ENCODE measurements at regions of chr12 and their contacts with region 1.

Region 1: DNA sequence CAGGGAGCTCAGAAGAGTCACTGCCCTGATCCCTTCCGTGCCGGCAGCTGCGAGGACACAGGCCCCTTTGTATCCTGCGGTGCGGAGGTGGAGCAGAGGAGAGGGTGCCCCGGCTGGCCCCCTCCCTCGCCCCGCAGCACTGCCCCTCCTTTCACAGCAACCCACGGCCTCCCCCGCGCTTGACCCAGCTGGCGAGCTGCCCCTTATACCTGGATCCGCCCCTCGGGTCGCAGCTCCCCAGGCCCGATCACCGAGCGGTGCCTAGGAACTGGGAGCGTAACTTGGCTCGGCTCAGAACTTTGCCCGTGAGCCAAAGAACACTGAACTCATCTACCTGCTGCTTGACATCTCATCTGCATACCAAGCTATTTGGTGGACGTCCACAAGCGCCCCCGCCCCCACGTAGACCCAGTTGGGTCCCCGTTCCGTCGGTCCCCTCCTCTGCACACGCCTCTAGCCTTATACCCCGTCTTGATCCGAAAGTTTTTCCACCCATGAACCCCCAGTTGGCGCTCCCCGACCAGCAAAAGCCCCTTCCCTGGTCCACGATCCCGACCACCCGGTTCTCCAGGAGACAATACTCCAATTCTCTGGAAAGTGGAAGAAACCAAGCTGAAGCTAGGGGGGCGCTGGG is 697 bp upstream of the DNAJC14 start:
- DNase-seq: peak; percentile 56 to 74
- ATAC-seq: peak; percentile 28 to 44 (median 38)
- H3K4me3 ChIP-seq: peak overlapping the region; percentile 93
- H3K27ac ChIP-seq: peak overlapping the region; percentile 78
- H3K4me1 ChIP-seq: peaks cover 13% of the 10 kb centered on the region
- H3K27me3 ChIP-seq: no peaks in the 10 kb centered on the region
- CTCF ChIP-seq: no peak

Region 2: GRCh38 chr12:55642669-55643068 is 187.4 kb before region 1 on chr12:
- intact Hi-C with region 1: loop called in 1 of 2 experiments (anchors 10 kb)
- DNase-seq: no peak
- ATAC-seq: no peak
- H3K4me3 ChIP-seq: no peak overlapping the region
- H3K27ac ChIP-seq: no peak overlapping the region
- H3K4me1 ChIP-seq: no peaks in the 10 kb centered on the region
- H3K27me3 ChIP-seq: no peaks in the 10 kb centered on the region
- CTCF ChIP-seq: no peak

Region 3: GRCh38 chr12:56256326-56256960 is 426.4 kb after region 1 on chr12:
- intact Hi-C with region 1: no loop called
- DNase-seq: peak; percentile 74 to 92
- ATAC-seq: peak; percentile 73 to 88 (median 82)
- H3K4me3 ChIP-seq: peak overlapping the region; percentile 97
- H3K27ac ChIP-seq: peak overlapping the region; percentile 89
- H3K4me1 ChIP-seq: peaks cover 38% of the 10 kb centered on the region
- H3K27me3 ChIP-seq: no peaks in the 10 kb centered on the region
- CTCF ChIP-seq: no peak

Region 4: DNA sequence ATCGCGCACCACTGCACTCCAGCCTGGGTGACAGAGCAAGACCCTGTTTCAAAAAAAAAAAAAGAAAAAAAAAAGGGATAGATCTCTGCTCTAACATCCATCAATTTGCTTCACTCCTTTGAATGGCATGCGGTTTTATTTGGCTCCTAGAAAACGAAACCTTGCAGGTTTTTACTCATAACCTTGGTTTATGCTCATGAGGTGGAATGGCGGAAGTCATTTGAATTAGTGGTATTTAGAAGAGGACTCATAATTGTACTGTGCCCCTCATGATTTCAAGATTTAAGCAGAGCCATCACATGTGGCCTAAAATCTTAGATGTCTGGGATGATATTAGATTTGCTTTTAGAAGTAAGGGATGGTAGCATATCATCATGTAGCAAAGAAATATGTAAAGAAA is 721.0 kb after region 1 on chr12:
- intact Hi-C with region 1: no loop called
- DNase-seq: no peak
- ATAC-seq: no peak
- H3K4me3 ChIP-seq: no peak overlapping the region
- H3K27ac ChIP-seq: no peak overlapping the region
- H3K4me1 ChIP-seq: no peaks in the 10 kb centered on the region
- H3K27me3 ChIP-seq: no peaks in the 10 kb centered on the region
- CTCF ChIP-seq: no peak

Measured in psoas muscle (tissue), 8 donors.